IMR-90 (cell line): ENCODE measurements at regions of chr14 and their contacts with region 1.

Region 1: DNA sequence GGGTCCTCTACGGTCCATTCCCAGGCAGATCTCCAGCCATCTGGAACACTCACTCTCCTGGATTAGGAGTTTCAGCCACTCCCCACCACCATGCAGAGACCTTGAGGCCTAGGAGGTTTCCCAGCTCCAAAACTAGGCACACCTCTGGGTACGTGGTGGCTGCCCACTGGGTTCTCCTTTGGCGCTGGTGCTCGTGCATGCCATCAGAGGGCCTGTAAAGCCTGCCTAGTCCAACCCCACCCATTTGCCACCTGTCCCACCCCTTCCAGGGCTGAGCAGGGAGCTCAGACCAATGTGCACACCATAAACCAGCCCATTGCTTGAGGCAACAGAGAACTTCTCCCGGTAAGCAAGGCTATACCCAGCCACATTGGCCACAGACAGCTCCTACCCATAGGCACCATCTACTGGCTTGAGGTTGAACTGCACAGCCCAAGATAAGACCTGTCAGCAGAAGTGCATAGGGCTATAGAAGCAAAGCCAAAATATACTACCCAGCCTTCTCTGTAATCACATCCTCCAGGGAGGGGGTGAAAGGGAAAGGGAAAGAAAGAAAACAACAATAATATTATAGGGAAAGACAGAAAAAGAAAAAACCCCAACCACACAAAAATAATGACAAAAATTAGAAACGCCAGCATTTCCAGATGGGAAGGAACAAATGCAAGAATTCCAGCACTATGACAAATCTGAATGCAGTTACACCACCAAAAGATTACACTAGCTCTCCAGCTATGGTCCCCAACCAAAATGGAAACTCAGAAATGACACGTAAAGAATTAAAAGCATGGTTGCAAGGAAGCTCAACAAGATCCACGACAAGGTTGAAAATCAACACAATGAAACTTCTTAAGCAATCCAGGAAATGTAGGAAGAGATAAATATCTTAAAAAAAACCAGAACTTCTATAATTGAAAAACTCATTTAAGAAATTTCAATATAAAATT is 111.9 kb upstream of the CCDC175 start:
- DNase-seq: peak; percentile 53
- ATAC-seq: peak; percentile 98
- H3K4me3 ChIP-seq: no peak overlapping the region
- H3K27ac ChIP-seq: no peak overlapping the region
- H3K4me1 ChIP-seq: no peaks in the 10 kb centered on the region
- H3K27me3 ChIP-seq: no peaks in the 10 kb centered on the region
- CTCF ChIP-seq: peak; percentile 56
- POLR2A ChIP-seq: no peak
- RAD21 ChIP-seq: peak; percentile 57

Region 2: DNA sequence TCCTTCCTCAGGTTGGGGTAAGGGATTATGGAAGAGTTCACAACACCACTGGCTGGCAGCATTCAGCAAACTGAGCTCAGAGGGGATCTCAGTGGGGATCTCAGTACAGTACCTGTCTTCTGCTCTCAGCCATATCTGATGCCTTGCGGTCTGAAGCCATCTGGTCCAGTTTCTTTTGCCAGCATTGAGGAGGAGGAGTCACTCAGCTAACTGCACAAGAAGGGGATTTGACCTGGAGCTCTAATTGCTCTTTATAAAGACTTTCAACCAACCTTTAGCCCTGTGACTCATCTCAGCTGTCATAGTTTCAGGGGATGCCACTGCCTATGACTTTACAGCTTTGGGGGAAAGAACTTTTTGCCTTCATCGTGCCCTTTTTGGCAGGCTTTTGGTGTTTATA is 159.3 kb before region 1 on chr14:
- CTCF ChIA-PET with region 1: no interaction called
- POLR2A ChIA-PET with region 1: no interaction called
- dilution Hi-C with region 1: no loop called
- in situ Hi-C with region 1: no loop called
- intact Hi-C with region 1: no loop called
- DNase-seq: no peak
- ATAC-seq: no peak
- H3K4me3 ChIP-seq: no peak overlapping the region
- H3K27ac ChIP-seq: no peak overlapping the region
- H3K4me1 ChIP-seq: peaks cover 3% of the 10 kb centered on the region
- H3K27me3 ChIP-seq: peaks cover 3% of the 10 kb centered on the region; the same call in 1 of the 2 replicates
- CTCF ChIP-seq: no peak
- POLR2A ChIP-seq: no peak
- RAD21 ChIP-seq: no peak

Region 3: DNA sequence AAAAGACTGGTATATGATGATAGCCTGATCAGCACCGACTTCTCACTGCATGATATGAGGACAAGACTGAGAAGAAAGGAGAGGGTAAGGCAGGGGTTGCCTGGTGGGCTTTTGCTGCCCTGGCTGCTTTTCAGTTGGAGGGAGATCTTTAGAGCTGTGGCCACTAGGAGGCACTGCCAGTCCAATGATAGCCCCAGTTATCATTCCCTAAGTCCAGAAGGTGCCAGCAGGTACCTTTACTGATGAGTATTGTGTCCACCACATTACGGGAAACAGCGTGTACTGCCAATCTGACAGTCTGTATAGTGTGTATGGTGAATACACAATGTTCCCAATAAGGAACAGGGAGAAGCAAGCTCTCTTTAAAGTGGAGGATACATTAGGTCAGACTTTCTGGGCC is 56.1 kb before region 1 on chr14:
- CTCF ChIA-PET with region 1: interaction called, 4 read pairs
- POLR2A ChIA-PET with region 1: no interaction called
- dilution Hi-C with region 1: no loop called
- in situ Hi-C with region 1: no loop called
- intact Hi-C with region 1: loop called (anchors 1 kb)
- DNase-seq: peak; percentile 6
- ATAC-seq: peak; percentile 46; the same call in 1 of the 2 replicates
- H3K4me3 ChIP-seq: no peak overlapping the region
- H3K27ac ChIP-seq: no peak overlapping the region
- H3K4me1 ChIP-seq: no peaks in the 10 kb centered on the region
- H3K27me3 ChIP-seq: peaks cover 11% of the 10 kb centered on the region
- CTCF ChIP-seq: peak; percentile 38
- POLR2A ChIP-seq: no peak
- RAD21 ChIP-seq: peak; percentile 53